ENCODE measurements at regions of chr11 and their contacts with region 1.

Region 1: GRCh38 chr11:122754553-122755322 is 83.6 kb upstream of the CRTAM start:
- DNase-seq: peak; percentile 42
- H3K4me3 Mint-ChIP-seq: no peak overlapping the region
- H3K27ac Mint-ChIP-seq: no peak overlapping the region
- H3K4me1 Mint-ChIP-seq: peaks cover 51% of the 10 kb centered on the region
- H3K27me3 Mint-ChIP-seq: no peaks in the 10 kb centered on the region

Region 2: DNA sequence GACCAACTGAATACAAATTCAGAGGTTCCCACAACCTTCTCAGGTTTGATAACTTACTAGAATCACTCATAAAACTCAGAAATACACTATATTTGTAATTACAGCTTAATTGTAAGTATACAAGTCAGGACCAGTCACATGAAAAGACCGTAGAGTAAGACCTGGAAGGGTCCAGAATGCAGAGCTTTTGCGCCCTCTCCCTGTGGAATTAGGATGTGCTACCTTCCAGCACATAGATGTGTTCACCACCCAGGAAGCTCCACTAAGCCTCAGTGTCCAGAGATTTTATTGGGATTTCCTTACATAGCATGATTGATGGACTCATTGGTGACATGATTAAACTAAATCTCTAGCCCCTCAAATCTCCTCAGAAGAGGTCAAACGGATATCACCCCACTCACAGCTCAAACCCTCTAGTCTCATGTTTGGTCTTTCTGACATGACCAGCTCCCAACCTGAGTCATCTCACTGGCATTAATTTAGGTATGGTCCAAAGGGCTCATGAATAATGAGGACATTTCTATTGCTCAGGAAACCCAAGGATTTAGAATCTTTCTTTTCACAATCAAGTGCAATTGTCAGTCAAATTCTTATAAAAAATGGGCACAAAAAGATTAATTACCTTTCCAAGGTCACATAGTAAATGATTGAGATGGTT is 176.4 kb before region 1 on chr11:
- CTCF ChIA-PET with region 1: interaction called, 13 read pairs
- POLR2A ChIA-PET with region 1: interaction called, 3 read pairs
- intact Hi-C with region 1: loop called (anchors 1 kb)
- DNase-seq: no peak
- H3K4me3 Mint-ChIP-seq: no peak overlapping the region
- H3K27ac Mint-ChIP-seq: no peak overlapping the region
- H3K4me1 Mint-ChIP-seq: peaks cover 8% of the 10 kb centered on the region
- H3K27me3 Mint-ChIP-seq: peaks cover 2% of the 10 kb centered on the region

Region 3: GRCh38 chr11:122637541-122637940 is 117.2 kb before region 1 on chr11:
- CTCF ChIA-PET with region 1: interaction called, 32 read pairs
- POLR2A ChIA-PET with region 1: no interaction called
- intact Hi-C with region 1: loop called (anchors 1 kb)
- DNase-seq: peak; percentile 22
- H3K4me3 Mint-ChIP-seq: no peak overlapping the region
- H3K27ac Mint-ChIP-seq: no peak overlapping the region
- H3K4me1 Mint-ChIP-seq: peaks cover 7% of the 10 kb centered on the region
- H3K27me3 Mint-ChIP-seq: peaks cover 1% of the 10 kb centered on the region

Region 4: GRCh38 chr11:122697636-122698167 is 57.0 kb before region 1 on chr11:
- CTCF ChIA-PET with region 1: interaction called, 25 read pairs
- POLR2A ChIA-PET with region 1: no interaction called
- intact Hi-C with region 1: no loop called
- DNase-seq: peak; percentile 65
- H3K4me3 Mint-ChIP-seq: peak overlapping the region; percentile 57
- H3K27ac Mint-ChIP-seq: peak overlapping the region; percentile 75
- H3K4me1 Mint-ChIP-seq: peaks cover 80% of the 10 kb centered on the region
- H3K27me3 Mint-ChIP-seq: no peaks in the 10 kb centered on the region

Region 5: GRCh38 chr11:122772945-122773344 is 18.2 kb after region 1 on chr11:
- CTCF ChIA-PET with region 1: interaction called, 27 read pairs
- POLR2A ChIA-PET with region 1: interaction called, 3 read pairs
- intact Hi-C with region 1: loop called (anchors 2 kb)
- DNase-seq: no peak
- H3K4me3 Mint-ChIP-seq: no peak overlapping the region
- H3K27ac Mint-ChIP-seq: no peak overlapping the region
- H3K4me1 Mint-ChIP-seq: peaks cover 34% of the 10 kb centered on the region
- H3K27me3 Mint-ChIP-seq: peaks cover 2% of the 10 kb centered on the region

Measured in activated CD4-positive, alpha-beta memory T cell treated with anti-CD3 and anti-CD28 coated beads for 36 hours (primary cell).